ENCODE measurements at regions of chr7 and their contacts with region 1.

Region 1: DNA sequence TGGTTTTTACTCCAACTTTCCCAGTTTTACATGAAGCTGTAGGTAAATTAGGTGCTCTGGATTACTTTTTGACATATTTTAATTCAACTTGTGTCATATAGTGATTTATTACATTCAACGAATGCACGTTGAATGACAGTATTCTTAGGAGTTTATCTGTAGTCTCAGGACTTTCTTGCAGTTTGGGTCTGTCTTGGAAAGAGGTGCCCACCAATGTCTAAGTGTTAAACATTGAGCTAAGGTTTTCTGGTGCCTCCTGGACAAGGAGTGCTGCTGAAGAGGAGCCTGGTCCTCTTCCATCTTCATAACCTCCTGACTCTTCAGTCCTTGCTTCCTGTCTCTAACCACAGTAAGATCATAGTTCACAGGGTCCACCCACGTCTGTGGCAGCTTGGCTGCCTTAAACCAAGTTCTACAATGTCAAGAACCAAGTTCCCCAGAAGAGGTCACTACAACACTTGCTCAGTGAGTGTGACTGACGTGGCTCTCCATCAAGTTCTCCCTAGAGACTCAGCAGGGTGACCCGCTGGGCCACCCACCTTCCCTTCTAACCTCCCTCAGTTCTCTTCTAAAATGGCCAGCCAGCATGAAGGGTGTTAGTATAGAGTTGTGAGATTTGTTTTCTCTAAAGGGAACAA is 6.1 kb downstream of the NPY start:
- DNase-seq: peak; percentile 76
- ATAC-seq: peak; percentile 100
- H3K4me3 ChIP-seq: no peak overlapping the region
- H3K27ac ChIP-seq: no peak overlapping the region
- H3K4me1 ChIP-seq: peaks cover 0 to 6% of the 10 kb centered on the region in 2 experiments; a peak in 2 of 4 replicates
- H3K27me3 ChIP-seq: peaks cover 10% of the 10 kb centered on the region
- CTCF ChIP-seq: peak; percentile 57 to 66 (median 60); a peak in 5 of 6 replicates
- POLR2A ChIP-seq: no peak
- RAD21 ChIP-seq: peak; percentile 84

Region 2: GRCh38 chr7:23863209-23863798 is 426.8 kb before region 1 on chr7:
- CTCF ChIA-PET with region 1: interaction called, 7 read pairs
- POLR2A ChIA-PET with region 1: no interaction called
- RAD21 ChIA-PET with region 1: no interaction called
- intact Hi-C with region 1: loop called (anchors 1 kb)
- DNase-seq: peak; percentile 45
- ATAC-seq: peak; percentile 86
- H3K4me3 ChIP-seq: no peak overlapping the region
- H3K27ac ChIP-seq: no peak overlapping the region
- H3K4me1 ChIP-seq: no peaks in the 10 kb centered on the region
- H3K27me3 ChIP-seq: no peaks in the 10 kb centered on the region
- CTCF ChIP-seq: peak; percentile 65 to 82 (median 77); a peak in 5 of 6 replicates
- POLR2A ChIP-seq: no peak
- RAD21 ChIP-seq: peak; percentile 90

Region 3: DNA sequence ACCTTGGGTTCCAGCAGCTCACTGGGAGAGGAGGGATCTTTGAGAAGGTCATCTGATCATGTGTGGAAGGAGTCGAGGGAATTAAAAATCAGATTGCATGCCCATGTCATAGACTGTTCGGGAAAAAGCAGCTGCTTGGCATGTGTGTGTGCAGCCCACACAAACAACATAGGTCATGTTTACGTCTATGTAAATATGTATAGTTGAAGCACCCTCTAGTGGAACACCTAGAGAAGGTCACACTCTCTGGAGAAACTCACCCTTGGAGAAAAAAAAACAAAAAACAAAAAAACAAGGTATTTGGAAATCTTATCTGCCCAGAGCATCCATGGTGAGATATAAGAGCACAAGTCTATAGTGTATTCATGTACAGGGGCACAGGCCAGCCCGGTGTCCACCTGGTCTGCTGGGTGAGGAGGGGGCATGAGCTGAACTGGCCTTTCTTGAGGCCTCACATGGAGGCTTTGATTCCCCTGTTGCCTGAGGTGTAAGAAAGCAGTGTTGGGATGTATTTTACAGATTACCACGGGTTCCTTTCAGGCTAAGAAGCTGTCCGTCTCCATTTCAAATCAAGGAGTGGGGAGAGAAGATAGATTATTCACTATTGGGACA is 91.9 kb after region 1 on chr7:
- CTCF ChIA-PET with region 1: interaction called, 10 read pairs
- POLR2A ChIA-PET with region 1: no interaction called
- RAD21 ChIA-PET with region 1: interaction called, 3 to 6 read pairs
- intact Hi-C with region 1: loop called (anchors 1 kb)
- DNase-seq: peak; percentile 10
- ATAC-seq: peak; percentile 82
- H3K4me3 ChIP-seq: no peak overlapping the region
- H3K27ac ChIP-seq: no peak overlapping the region
- H3K4me1 ChIP-seq: peaks cover 6 to 10% of the 10 kb centered on the region in 2 experiments; a peak in 3 of 4 replicates
- H3K27me3 ChIP-seq: no peaks in the 10 kb centered on the region
- CTCF ChIP-seq: peak; percentile 49 to 69 (median 67); a peak in 5 of 6 replicates
- POLR2A ChIP-seq: no peak
- RAD21 ChIP-seq: peak; percentile 72

Region 4: DNA sequence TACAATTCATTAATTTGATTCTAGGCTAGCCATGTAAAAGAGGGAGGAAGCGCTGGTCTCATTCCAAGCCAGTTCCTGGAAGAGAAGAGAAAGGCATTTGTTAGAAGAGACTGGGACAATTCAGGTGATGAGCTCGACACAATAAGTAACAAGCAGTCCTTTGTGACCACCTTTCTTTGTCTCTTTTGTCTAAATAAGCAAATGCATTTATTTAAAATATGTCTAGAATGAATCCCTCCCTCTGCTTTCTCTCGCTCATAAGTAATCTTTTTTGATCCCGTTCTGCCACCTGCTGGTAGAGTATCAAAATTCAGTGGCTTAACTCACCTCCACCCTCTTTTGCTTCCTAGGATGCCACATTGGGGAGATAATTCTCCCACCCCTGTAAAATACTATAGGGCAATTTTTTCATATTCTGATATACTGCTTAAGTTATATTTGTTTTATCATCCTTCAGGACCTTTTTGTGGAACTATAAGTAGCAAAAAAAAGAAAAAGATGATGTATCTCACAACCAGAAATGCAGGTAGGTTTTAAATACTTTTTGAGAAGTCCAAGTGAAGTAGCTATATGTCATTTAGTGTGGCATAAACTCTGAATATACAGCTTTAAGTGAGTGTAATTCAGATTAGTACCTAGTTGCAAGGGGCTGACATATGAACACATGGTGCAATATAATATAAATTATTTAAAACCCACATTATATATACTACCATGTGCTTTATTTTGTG is 375.6 kb after region 1 on chr7:
- CTCF ChIA-PET with region 1: no interaction called
- POLR2A ChIA-PET with region 1: no interaction called
- RAD21 ChIA-PET with region 1: interaction called in 1 of 2 experiments, 4 read pairs
- intact Hi-C with region 1: loop called (anchors 2 kb)
- DNase-seq: peak; percentile 27
- ATAC-seq: peak; percentile 78
- H3K4me3 ChIP-seq: no peak overlapping the region
- H3K27ac ChIP-seq: no peak overlapping the region
- H3K4me1 ChIP-seq: 0 out of 4 replicates have a peak, but pooled peaks cover 0 to 7% of the 10 kb centered on the region in 2 experiments
- H3K27me3 ChIP-seq: no peaks in the 10 kb centered on the region
- CTCF ChIP-seq: peak; percentile 57 to 78 (median 58); a peak in 5 of 6 replicates
- POLR2A ChIP-seq: no peak
- RAD21 ChIP-seq: peak; percentile 76

Region 5: DNA sequence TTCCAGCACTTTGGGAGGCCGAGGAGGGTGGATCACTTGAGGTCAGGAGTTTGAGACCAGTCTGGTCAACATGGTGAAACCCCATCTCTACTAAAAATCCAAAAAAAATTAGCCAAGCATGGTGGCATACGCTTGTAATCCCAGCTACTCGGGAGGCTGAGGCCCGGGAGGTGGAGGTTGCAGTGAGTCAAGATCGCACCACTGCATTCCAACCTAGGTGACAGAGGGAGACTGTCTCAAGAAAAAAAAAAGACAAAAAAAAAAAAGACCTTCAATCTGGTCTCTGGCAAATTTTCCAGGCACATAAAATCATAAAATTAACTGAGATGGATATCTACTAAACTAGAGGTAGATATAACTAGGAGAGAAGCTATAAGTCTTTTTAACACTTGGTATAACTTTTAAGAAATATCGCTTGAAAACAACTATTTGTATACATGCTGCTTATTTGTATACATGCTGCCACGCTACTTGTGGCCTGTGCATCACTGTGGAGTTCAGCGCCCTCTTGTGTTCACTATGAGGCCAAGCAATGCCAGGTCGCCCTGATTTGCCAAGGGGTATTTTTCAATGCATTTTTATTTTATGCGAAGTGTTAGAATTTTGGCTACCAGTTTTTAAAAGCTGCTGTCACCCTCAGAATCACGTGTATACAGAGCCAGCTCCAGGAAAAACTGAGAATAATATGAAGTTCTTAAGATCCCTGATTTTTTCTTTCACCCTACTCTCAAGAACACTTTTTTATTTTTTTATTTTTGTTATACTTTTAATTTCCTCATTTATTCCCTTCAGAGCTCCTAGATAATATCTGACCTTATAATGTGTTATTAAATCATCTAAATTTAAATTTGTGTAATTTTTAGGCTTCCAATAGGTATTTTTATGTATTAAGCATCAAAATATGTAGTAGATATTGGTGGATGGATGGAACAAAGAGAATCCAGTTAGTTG is 808.2 kb after region 1 on chr7:
- CTCF ChIA-PET with region 1: no interaction called
- POLR2A ChIA-PET with region 1: no interaction called
- RAD21 ChIA-PET with region 1: no interaction called
- intact Hi-C with region 1: loop called (anchors 2 kb)
- DNase-seq: peak; percentile 70
- ATAC-seq: peak; percentile 80
- H3K4me3 ChIP-seq: no peak overlapping the region
- H3K27ac ChIP-seq: no peak overlapping the region
- H3K4me1 ChIP-seq: peaks cover 2 to 25% of the 10 kb centered on the region in 2 experiments; a peak in 3 of 4 replicates
- H3K27me3 ChIP-seq: no peaks in the 10 kb centered on the region
- CTCF ChIP-seq: peak; percentile 81 to 98 (median 87)
- POLR2A ChIP-seq: no peak
- RAD21 ChIP-seq: peak; percentile 93